GM12878 (cell line): ENCODE measurements at regions of chr11 and their contacts with region 1.

Region 1: GRCh38 chr11:94786264-94787126 is 18.3 kb downstream of the AMOTL1 start:
- DNase-seq: no peak
- ATAC-seq: peak; percentile 63
- H3K4me3 ChIP-seq: no peak overlapping the region
- H3K27ac ChIP-seq: no peak overlapping the region
- H3K4me1 ChIP-seq: no peaks in the 10 kb centered on the region
- H3K27me3 ChIP-seq: no peaks in the 10 kb centered on the region
- CTCF ChIP-seq: peak; percentile 46 to 53 (median 47); a peak in 5 of 6 replicates
- EP300 ChIP-seq: no peak
- POLR2A ChIP-seq: no peak
- RAD21 ChIP-seq: peak; percentile 45

Region 2: DNA sequence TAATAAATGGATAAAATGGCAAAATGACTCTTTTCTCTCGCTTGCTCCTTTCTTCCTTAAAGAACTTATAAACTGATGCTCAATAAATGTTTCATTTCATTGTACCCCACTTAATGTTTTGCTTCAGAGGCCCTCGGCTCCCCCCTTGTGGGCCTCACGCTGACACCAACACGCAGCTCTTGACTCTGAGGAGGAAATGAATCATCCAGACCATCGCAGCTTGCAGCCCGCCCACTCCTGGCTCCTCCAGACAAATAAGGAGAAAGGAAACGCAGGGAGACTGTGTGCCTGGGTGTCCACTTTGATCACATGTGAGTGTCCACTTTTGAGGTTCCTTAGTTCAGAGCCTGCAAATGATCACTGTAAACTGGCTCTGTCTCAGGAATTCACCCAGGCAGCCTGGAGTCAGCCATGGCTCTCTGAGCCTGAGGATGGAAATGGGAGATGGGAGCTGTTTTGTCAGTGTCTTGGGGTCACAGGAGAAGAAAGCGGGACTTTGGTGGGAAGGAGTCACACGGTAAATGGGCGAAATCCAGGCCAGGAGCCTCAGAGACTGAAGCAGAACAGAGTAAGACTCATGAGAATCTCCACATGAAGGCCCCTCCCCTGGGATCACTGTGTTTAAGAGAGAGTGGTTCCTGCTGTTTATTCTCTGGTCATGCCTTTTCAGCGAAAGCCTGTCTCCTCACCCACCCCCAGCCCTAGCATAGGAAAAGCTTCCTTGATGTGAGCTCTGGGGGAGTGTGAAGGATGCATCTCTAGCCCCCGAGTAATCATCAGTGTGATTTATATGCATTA is 90.3 kb after region 1 on chr11:
- CTCF ChIA-PET with region 1: interaction called, 12 read pairs
- POLR2A ChIA-PET with region 1: no interaction called
- RAD21 ChIA-PET with region 1: interaction called, 3 read pairs
- SMC1A ChIA-PET with region 1: interaction called, 4 read pairs
- in situ Hi-C with region 1: no loop called
- intact Hi-C with region 1: no loop called
- DNase-seq: peak; percentile 31
- ATAC-seq: peak; percentile 95
- H3K4me3 ChIP-seq: no peak overlapping the region
- H3K27ac ChIP-seq: no peak overlapping the region
- H3K4me1 ChIP-seq: peaks cover 10% of the 10 kb centered on the region
- H3K27me3 ChIP-seq: no peaks in the 10 kb centered on the region; a peak in 1 of 4 replicates
- CTCF ChIP-seq: peak in 2 of 3 experiments; percentile 11 to 42; a peak in 2 of 6 replicates
- EP300 ChIP-seq: 0 out of 4 replicates have a peak, but pooled peaks of 1 of the 2 experiments have one; percentile 13
- POLR2A ChIP-seq: no peak
- RAD21 ChIP-seq: peak; percentile 57

Region 3: DNA sequence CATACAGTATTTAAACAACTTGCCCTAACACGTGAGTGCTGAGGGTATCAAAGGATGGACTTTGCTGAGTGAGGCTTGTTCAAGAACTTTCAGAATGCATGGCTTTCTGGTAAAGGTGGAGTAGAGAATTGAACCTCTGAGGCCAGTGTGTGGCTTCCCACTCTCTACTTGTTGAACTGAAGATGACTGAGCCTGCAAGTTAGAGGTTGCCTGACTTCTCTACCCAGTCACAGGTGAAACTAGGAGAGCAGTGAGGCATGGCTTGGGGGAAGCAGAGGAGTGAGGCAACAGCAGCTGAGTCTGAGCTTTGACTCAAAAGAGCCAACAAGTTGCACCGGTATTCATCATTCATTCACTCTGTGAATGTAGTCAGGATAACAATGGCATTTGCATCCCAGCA is 700.9 kb after region 1 on chr11:
- CTCF ChIA-PET with region 1: no interaction called
- POLR2A ChIA-PET with region 1: no interaction called
- RAD21 ChIA-PET with region 1: no interaction called
- SMC1A ChIA-PET with region 1: no interaction called
- in situ Hi-C with region 1: no loop called
- intact Hi-C with region 1: no loop called
- DNase-seq: peak; percentile 83
- ATAC-seq: peak; percentile 100
- H3K4me3 ChIP-seq: no peak overlapping the region
- H3K27ac ChIP-seq: no peak overlapping the region
- H3K4me1 ChIP-seq: peaks cover 4% of the 10 kb centered on the region; the same call in 1 of the 2 replicates
- H3K27me3 ChIP-seq: peaks cover 0 to 2% of the 10 kb centered on the region in 2 experiments; a peak in 1 of 4 replicates
- CTCF ChIP-seq: no peak
- EP300 ChIP-seq: peak; percentile 37 to 60; a peak in 1 of 4 replicates
- POLR2A ChIP-seq: no peak
- RAD21 ChIP-seq: no peak